CD4-positive, alpha-beta memory T cell (primary cell): ENCODE measurements at regions of chr3 and their contacts with region 1.

Region 1: DNA sequence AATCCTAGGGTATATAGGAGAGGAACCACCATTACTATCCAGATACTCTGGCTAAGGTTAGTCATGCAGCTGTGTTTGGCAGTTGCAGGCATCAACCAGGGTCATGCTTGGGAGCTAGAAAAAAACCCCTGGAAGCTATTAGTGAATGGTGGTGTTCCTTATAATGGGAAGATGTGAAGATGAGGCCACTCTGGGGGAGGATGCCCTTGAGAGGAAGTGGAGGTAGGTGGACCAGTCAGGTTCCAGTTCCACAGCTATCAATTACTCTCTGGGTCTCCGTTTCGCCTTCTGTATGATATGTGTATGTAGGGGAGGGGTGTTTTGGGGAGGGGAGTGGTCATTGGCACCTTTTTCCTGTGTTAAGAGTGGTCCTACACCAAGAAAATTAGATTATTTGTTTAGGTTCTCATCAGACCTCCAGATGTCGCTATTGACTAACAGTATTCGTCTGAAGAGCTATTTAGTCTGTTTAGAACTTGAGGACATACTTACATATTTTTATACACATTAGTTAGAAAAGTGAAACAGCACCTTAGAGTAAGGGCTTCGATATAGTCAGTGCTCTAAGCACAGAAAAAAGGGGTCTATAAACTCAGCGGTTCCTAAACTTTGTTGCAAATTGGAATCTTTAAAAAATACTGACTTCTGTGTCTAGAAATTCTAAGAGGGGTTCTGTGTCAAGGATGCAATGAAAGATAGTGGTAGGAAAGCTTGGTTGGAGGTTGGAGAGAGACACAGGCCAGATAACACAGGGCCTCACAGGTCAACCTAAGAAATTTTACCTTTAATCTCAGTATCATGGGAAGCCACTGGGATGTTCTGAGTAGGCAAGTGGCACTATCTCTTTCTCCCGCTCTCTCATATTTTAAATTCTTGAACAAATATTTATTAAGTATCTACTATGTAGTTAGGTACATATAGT is 9.1 kb upstream of the HPS3 start:
- DNase-seq: peak in 4 of 5 donors; percentile 49 to 54 (median 51)
- H3K4me3 ChIP-seq: no peak overlapping the region
- H3K4me3 Mint-ChIP-seq: no peak overlapping the region
- H3K27ac ChIP-seq: no peak overlapping the region
- H3K27ac Mint-ChIP-seq: no peak overlapping the region
- H3K4me1 ChIP-seq: no peaks in the 10 kb centered on the region
- H3K4me1 Mint-ChIP-seq: peaks cover 0 to 3% (median 2%) of the 10 kb centered on the region in 4 donors
- H3K27me3 ChIP-seq: no peaks in the 10 kb centered on the region
- H3K27me3 Mint-ChIP-seq: peaks cover 3 to 8% of the 10 kb centered on the region in 2 donors

Region 2: GRCh38 chr3:149267565-149267964 is 147.3 kb after region 1 on chr3:
- CTCF ChIA-PET with region 1: interaction called, 154 read pairs
- POLR2A ChIA-PET with region 1: no interaction called
- intact Hi-C with region 1: no loop called
- DNase-seq: no peak
- H3K4me3 ChIP-seq: no peak overlapping the region
- H3K4me3 Mint-ChIP-seq: no peak overlapping the region
- H3K27ac ChIP-seq: no peak overlapping the region
- H3K27ac Mint-ChIP-seq: no peak overlapping the region
- H3K4me1 ChIP-seq: no peaks in the 10 kb centered on the region
- H3K4me1 Mint-ChIP-seq: no peaks in the 10 kb centered on the region
- H3K27me3 ChIP-seq: no peaks in the 10 kb centered on the region
- H3K27me3 Mint-ChIP-seq: peaks cover 0 to 3% of the 10 kb centered on the region in 2 donors

Region 3: DNA sequence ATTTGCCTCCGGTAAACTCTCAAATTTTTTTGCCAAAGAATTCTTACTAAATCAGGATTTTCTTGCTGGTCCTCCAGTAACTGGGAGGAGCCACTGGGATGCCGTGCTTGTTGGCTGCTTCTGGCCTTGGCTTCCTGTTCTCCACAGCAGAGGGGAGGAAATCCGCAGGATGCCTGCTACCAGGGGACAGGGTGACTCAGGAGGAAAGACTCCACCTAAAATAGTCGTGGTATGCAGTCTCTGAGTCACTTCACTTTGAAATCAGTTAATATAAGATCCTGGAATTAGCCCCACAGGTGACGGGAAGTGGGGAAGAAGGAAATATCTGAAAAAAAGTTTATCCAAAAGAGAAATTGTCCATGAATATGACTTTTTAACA is 219.6 kb after region 1 on chr3:
- CTCF ChIA-PET with region 1: interaction called, 7 read pairs
- POLR2A ChIA-PET with region 1: no interaction called
- intact Hi-C with region 1: loop called (anchors 5 kb)
- DNase-seq: no peak
- H3K4me3 ChIP-seq: no peak overlapping the region
- H3K4me3 Mint-ChIP-seq: no peak overlapping the region
- H3K27ac ChIP-seq: no peak overlapping the region
- H3K27ac Mint-ChIP-seq: no peak overlapping the region
- H3K4me1 ChIP-seq: no peaks in the 10 kb centered on the region
- H3K4me1 Mint-ChIP-seq: peaks cover 0 to 3% (median 1%) of the 10 kb centered on the region in 4 donors
- H3K27me3 ChIP-seq: no peaks in the 10 kb centered on the region
- H3K27me3 Mint-ChIP-seq: peaks cover 8 to 12% of the 10 kb centered on the region in 2 donors

Region 4: GRCh38 chr3:149717391-149718056 is 597.2 kb after region 1 on chr3:
- CTCF ChIA-PET with region 1: interaction called, 18 read pairs
- POLR2A ChIA-PET with region 1: no interaction called
- intact Hi-C with region 1: no loop called
- DNase-seq: peak in 4 of 5 donors; percentile 7 to 26 (median 16)
- H3K4me3 ChIP-seq: no peak overlapping the region
- H3K4me3 Mint-ChIP-seq: peak overlapping the region in 1 of 8 donors; percentile 4
- H3K27ac ChIP-seq: no peak overlapping the region
- H3K27ac Mint-ChIP-seq: peak overlapping the region in 1 of 7 donors; percentile 10
- H3K4me1 ChIP-seq: no peaks in the 10 kb centered on the region
- H3K4me1 Mint-ChIP-seq: peaks cover 0 to 3% (median 0%) of the 10 kb centered on the region in 4 donors
- H3K27me3 ChIP-seq: no peaks in the 10 kb centered on the region
- H3K27me3 Mint-ChIP-seq: no peaks in the 10 kb centered on the region

Region 5: GRCh38 chr3:149771652-149772271 is 651.5 kb after region 1 on chr3:
- CTCF ChIA-PET with region 1: interaction called, 28 read pairs
- POLR2A ChIA-PET with region 1: no interaction called
- intact Hi-C with region 1: loop called (anchors 1 kb)
- DNase-seq: peak in 3 of 5 donors; percentile 9 to 20 (median 16)
- H3K4me3 ChIP-seq: no peak overlapping the region
- H3K4me3 Mint-ChIP-seq: no peak overlapping the region
- H3K27ac ChIP-seq: no peak overlapping the region
- H3K27ac Mint-ChIP-seq: peak overlapping the region in 1 of 7 donors; percentile 0
- H3K4me1 ChIP-seq: no peaks in the 10 kb centered on the region
- H3K4me1 Mint-ChIP-seq: no peaks in the 10 kb centered on the region
- H3K27me3 ChIP-seq: no peaks in the 10 kb centered on the region
- H3K27me3 Mint-ChIP-seq: peaks cover 4 to 7% of the 10 kb centered on the region in 2 donors